HepG2 (cell line): ENCODE measurements at regions of chr3 and their contacts with region 1.

Region 1: DNA sequence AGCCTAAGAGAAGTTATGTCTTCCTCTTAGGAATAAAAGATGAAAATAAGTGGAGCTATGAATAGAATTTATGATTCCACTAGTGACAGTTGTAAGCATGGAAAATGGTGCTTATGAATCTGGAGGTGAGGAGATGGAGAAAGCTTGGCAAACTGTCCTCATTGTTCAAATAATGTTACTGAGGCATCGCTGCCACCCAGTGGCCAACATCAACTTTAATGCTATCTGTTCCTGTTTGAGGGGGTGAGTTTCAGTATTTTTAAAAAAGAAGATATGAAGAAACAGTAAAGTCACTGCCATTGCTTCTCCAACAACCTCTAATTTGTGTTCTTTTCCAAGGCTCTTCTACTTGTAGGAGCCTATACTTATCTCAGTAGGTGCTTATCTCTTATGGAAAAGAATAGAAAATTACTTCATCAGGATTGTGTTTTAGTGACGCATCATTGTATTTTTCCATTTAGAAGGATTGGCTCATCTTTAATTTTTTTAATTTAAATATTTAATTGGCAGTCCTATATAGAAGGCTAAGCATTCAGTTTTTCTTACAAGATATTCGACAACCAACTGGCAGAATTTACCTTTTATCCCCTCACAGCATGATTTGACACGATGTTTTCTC is 260.4 kb upstream of the P2RY1 start:
- DNase-seq: peak; percentile 26
- ATAC-seq: peak; percentile 81
- H3K4me3 ChIP-seq: no peak overlapping the region
- H3K27ac ChIP-seq: no peak overlapping the region
- H3K4me1 ChIP-seq: no peaks in the 10 kb centered on the region
- H3K27me3 ChIP-seq: no peaks in the 10 kb centered on the region
- CTCF ChIP-seq: peak; percentile 52
- EP300 ChIP-seq: no peak
- POLR2A ChIP-seq: no peak
- RAD21 ChIP-seq: no peak

Region 2: DNA sequence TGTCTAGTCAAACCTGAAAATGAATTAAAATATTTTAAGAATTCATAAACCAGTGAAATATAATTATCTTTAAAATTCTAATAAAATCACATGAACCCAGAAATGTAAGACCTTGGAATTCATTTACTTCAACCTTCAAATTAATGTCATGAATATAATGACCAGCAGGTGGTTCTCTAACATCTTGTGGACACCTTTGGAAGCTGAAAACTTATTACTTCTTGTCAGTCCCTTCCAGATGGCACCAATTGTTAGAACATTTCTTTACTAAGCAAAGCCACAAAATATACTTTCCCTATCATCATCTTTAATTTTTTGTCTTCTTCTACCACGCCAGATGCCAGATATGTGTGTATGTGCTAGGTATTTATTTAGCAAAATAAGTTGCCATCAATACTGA is 65.9 kb before region 1 on chr3:
- CTCF ChIA-PET with region 1: interaction called, 3 read pairs
- POLR2A ChIA-PET with region 1: no interaction called
- in situ Hi-C with region 1: no loop called
- intact Hi-C with region 1: loop called (anchors 1 kb)
- DNase-seq: peak; percentile 7
- ATAC-seq: no peak
- H3K4me3 ChIP-seq: no peak overlapping the region
- H3K27ac ChIP-seq: no peak overlapping the region
- H3K4me1 ChIP-seq: no peaks in the 10 kb centered on the region
- H3K27me3 ChIP-seq: no peaks in the 10 kb centered on the region; a peak in 1 of 5 replicates
- CTCF ChIP-seq: no peak
- EP300 ChIP-seq: no peak
- POLR2A ChIP-seq: no peak
- RAD21 ChIP-seq: no peak